ENCODE measurements at regions of chr2 and their contacts with region 1.

Region 1: GRCh38 chr2:108583903-108584520 is 49.7 kb downstream of the LIMS1 start:
- DNase-seq: no peak
- ATAC-seq: peak; percentile 77

Region 2: GRCh38 chr2:108215794-108216211 is 368.2 kb before region 1 on chr2:
- intact Hi-C with region 1: loop called (anchors 10 kb)
- DNase-seq: no peak
- ATAC-seq: no peak

Region 3: GRCh38 chr2:108351889-108352288 is 232.1 kb before region 1 on chr2:
- intact Hi-C with region 1: loop called (anchors 1 kb)
- DNase-seq: no peak
- ATAC-seq: no peak

Region 4: DNA sequence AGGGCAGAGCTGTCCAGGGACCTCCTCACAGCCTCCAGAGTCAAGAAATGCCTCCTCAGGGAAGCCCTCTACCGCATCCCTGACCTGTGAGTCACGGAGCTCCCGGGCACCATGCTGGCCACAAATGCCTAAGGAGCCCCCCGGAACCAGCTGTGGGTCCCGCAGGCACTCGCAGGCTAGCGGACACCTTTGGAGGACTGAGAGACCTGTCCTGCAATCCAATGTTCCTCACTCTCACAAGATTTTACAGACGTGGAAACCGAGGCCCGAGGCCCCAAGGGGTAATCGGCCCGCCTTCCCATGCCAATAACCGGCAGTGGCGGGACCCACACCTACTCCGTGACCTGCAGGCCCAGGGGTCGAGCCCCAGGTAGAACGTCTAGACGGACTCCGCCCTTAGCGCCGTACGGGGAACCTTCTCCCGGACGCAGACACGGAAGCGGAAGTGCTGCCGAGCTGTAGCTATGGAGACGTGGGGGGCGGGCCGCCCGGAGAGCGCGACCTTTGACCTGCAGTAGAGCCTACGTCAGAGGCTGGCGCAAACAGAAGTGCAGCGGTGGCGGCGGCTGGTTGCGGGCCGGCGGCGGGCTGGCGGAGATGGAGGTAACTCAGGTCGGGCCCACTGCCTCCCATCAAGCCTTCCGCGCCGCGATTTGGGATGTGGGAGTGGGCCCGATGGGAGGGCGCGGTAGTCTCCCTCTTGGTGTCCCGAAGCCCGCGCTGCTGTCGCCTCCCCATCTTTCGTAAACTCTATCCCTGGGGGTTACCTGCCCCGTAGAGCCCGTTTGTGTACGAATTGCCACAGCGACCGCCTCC is 135.1 kb before region 1 on chr2 and contains the start of gene GCC2:
- intact Hi-C with region 1: loop called (anchors 5 kb)
- DNase-seq: peak; percentile 99
- ATAC-seq: peak; percentile 98
- total RNA-seq, gene GCC2: 24.0 TPM

Region 5: DNA sequence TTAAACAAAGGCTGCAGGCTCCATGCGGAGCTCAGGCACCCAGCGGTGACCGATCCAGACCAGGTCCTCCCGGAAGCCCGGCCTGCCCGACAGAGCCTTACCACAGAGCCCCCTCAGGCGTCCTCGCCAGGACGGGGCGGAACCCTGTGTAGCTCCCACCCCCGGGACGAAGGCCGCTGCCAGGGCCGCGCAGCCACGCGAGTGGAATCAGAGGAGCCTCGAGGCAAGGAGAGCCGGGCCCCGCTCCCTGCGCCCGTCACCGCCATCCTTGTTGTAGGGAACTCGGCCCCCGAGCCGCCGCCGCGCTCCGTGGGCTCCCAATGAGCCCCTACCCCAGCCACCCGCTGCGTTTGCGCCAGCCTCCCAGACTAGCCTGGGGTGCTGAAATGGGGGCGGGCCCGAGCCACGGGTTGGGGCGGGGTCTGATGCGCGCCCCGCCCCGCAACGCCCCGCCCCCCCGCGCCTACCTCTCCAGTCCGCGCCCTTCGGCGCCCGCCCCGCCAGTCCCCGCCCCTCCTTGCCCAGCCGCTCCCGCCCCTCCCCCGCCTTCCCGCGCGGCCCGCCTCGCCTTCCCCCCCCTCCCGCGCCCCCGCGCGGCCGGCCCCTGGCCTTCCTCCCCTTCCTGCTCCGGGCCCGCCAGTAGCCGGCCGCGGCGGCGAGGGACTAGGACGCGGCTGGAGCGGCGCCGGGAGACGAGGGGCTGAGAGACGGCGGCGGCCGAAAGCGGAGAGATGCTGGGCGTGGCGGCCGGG is 50.0 kb before region 1 on chr2 and contains the start of gene LIMS1:
- intact Hi-C with region 1: loop called (anchors 2 kb)
- DNase-seq: peak; percentile 96
- ATAC-seq: peak; percentile 97
- total RNA-seq, gene LIMS1: 84.3 TPM

Region 6: GRCh38 chr2:108565778-108566375 is 18.1 kb before region 1 on chr2:
- intact Hi-C with region 1: no loop called
- DNase-seq: no peak
- ATAC-seq: no peak

Region 7: GRCh38 chr2:108623616-108624015 is 39.6 kb after region 1 on chr2:
- intact Hi-C with region 1: no loop called
- DNase-seq: no peak
- ATAC-seq: no peak

Region 8: GRCh38 chr2:108637304-108637669 is 53.3 kb after region 1 on chr2:
- intact Hi-C with region 1: loop called (anchors 5 kb)
- DNase-seq: no peak
- ATAC-seq: peak; percentile 90

Measured in Right ventricle myocardium inferior (tissue), 1 donor.